K562 (cell line): ENCODE measurements at regions of chr1 and their contacts with region 1.

Region 1: GRCh38 chr1:28470146-28470545 is 35.7 kb upstream of the RCC1 start:
- DNase-seq: no peak
- ATAC-seq: no peak
- H3K4me3 ChIP-seq: no peak overlapping the region
- H3K27ac ChIP-seq: no peak overlapping the region
- H3K4me1 ChIP-seq: peaks cover 7 to 8% of the 10 kb centered on the region in 2 experiments; a peak in 3 of 5 replicates
- H3K27me3 ChIP-seq: no peaks in the 10 kb centered on the region
- CTCF ChIP-seq: no peak
- EP300 ChIP-seq: no peak
- POLR2A ChIP-seq: no peak
- RAD21 ChIP-seq: no peak

Region 2: DNA sequence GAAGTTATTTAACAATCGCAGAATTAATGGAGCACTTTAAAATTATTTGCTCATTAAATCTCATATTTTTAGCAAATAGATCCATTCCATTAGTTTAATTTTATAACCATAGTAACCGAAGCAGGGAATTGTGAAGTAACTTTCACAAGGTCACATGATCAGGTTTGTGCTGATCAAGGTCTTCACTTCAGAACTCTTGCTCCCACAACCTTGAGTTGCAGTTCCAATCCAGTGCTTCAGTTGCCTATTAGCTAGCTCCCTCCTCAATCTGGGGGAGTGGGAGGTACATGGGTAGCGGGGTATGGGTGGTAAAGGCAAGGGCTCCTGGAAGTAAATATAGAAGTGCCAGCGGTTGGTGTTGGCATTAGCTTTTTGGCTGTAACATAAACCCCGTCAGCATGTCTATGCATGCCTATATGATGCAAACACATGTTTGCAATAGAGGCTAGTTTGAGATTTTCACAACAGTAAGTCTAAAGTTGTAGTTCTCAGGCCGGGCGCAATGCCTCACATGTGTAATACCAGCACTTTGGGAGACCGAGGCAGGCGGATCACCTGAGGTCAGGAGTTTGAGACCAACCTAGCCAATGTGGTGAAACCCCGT is 228.4 kb before region 1 on chr1:
- CTCF ChIA-PET with region 1: no interaction called
- POLR2A ChIA-PET with region 1: no interaction called
- in situ Hi-C with region 1: no loop called
- intact Hi-C with region 1: no loop called
- DNase-seq: no peak
- ATAC-seq: no peak
- H3K4me3 ChIP-seq: no peak overlapping the region
- H3K27ac ChIP-seq: no peak overlapping the region
- H3K4me1 ChIP-seq: peaks cover 0 to 28% of the 10 kb centered on the region in 2 experiments; a peak in 4 of 5 replicates
- H3K27me3 ChIP-seq: no peaks in the 10 kb centered on the region
- CTCF ChIP-seq: no peak
- EP300 ChIP-seq: no peak
- POLR2A ChIP-seq: no peak
- RAD21 ChIP-seq: no peak

Region 3: GRCh38 chr1:28359592-28360239 is 110.4 kb before region 1 on chr1:
- CTCF ChIA-PET with region 1: interaction called, 17 read pairs
- POLR2A ChIA-PET with region 1: interaction called, 3 read pairs
- in situ Hi-C with region 1: no loop called
- intact Hi-C with region 1: loop called (anchors 1 kb)
- DNase-seq: peak; percentile 63 to 84 (median 68)
- ATAC-seq: peak; percentile 88
- H3K4me3 ChIP-seq: no peak overlapping the region
- H3K27ac ChIP-seq: no peak overlapping the region
- H3K4me1 ChIP-seq: peaks cover 6 to 7% of the 10 kb centered on the region in 2 experiments; a peak in 3 of 5 replicates
- H3K27me3 ChIP-seq: no peaks in the 10 kb centered on the region
- CTCF ChIP-seq: peak; percentile 65 to 86 (median 77)
- EP300 ChIP-seq: peak; percentile 33
- POLR2A ChIP-seq: no peak
- RAD21 ChIP-seq: peak; percentile 72 to 83

Region 4: DNA sequence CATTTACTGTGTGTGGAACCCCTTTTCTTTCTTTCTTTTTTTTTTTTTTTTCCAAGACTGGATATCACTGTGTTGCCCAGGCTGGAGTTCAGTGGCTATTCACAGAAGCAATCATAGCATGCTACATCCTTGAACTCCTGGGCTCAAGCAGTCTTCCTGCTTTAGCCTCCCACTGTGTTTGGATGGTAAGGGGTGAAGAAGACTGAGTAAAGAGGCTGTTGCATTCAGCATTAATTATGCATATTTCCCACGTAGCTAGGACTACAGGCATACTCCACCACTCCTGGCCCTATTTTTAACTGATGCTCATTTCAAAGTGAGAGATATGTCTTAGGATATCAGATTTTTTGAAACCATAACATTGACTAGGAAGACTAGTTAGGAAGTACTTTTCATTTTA is 61.1 kb before region 1 on chr1:
- CTCF ChIA-PET with region 1: interaction called, 17 read pairs
- POLR2A ChIA-PET with region 1: no interaction called
- in situ Hi-C with region 1: no loop called
- intact Hi-C with region 1: loop called (anchors 1 kb)
- DNase-seq: no peak
- ATAC-seq: no peak
- H3K4me3 ChIP-seq: no peak overlapping the region
- H3K27ac ChIP-seq: no peak overlapping the region
- H3K4me1 ChIP-seq: peaks cover 3 to 23% of the 10 kb centered on the region in 2 experiments; a peak in 3 of 5 replicates
- H3K27me3 ChIP-seq: no peaks in the 10 kb centered on the region
- CTCF ChIP-seq: no peak
- EP300 ChIP-seq: no peak
- POLR2A ChIP-seq: no peak
- RAD21 ChIP-seq: no peak